Heart right ventricle (tissue), 16 donors: ENCODE measurements at regions of chr12 and their contacts with region 1.

Region 1: GRCh38 chr12:116880817-116881324 is 370 bp downstream of the HRK start:
- DNase-seq: peak; percentile 10 to 28
- ATAC-seq: peak; percentile 41 to 88 (median 74)
- H3K4me3 ChIP-seq: peak overlapping the region in 9 of 10 donors; percentile 27 to 54 (median 47)
- H3K27ac ChIP-seq: no peak overlapping the region
- H3K4me1 ChIP-seq: peaks cover 8 to 43% (median 32%) of the 10 kb centered on the region in 9 donors
- H3K27me3 ChIP-seq: peaks cover 7 to 91% (median 76%) of the 10 kb centered on the region in 7 donors
- CTCF ChIP-seq: peak in 2 of 9 donors; percentile 10 to 28

Region 2: GRCh38 chr12:116708826-116709756 is 171.8 kb before region 1 on chr12:
- intact Hi-C with region 1: loop called in 5 of 10 experiments (anchors 5 to 10 kb)
- DNase-seq: peak in 1 of 2 donors; percentile 33
- ATAC-seq: peak; percentile 55 to 85 (median 80)
- H3K4me3 ChIP-seq: peak overlapping the region in 3 of 10 donors; percentile 6 to 27 (median 6)
- H3K27ac ChIP-seq: no peak overlapping the region
- H3K4me1 ChIP-seq: peaks cover 3 to 22% (median 10%) of the 10 kb centered on the region in 9 donors
- H3K27me3 ChIP-seq: peaks cover 0 to 9% (median 0%) of the 10 kb centered on the region in 7 donors
- CTCF ChIP-seq: peak; percentile 34 to 79 (median 68)

Region 3: GRCh38 chr12:116861320-116861719 is 19.6 kb before region 1 on chr12:
- intact Hi-C with region 1: no loop called
- DNase-seq: peak; percentile 31 to 74
- ATAC-seq: peak in 7 of 8 donors; percentile 79 to 87 (median 84)
- H3K4me3 ChIP-seq: no peak overlapping the region
- H3K27ac ChIP-seq: no peak overlapping the region
- H3K4me1 ChIP-seq: peaks cover 0 to 26% (median 4%) of the 10 kb centered on the region in 9 donors
- H3K27me3 ChIP-seq: peaks cover 0 to 22% (median 9%) of the 10 kb centered on the region in 7 donors
- CTCF ChIP-seq: no peak